AG04449 (cell line): ENCODE measurements at regions of chr12 and their contacts with region 1.

Region 1: GRCh38 chr12:93397412-93397811 is 19.7 kb downstream of the NUDT4 start:
- DNase-seq: no peak
- H3K4me3 ChIP-seq: no peak overlapping the region
- CTCF ChIP-seq: no peak

Region 2: GRCh38 chr12:92987362-92987761 is 410.1 kb before region 1 on chr12:
- CTCF ChIA-PET with region 1: interaction called, 112 read pairs
- POLR2A ChIA-PET with region 1: no interaction called
- DNase-seq: peak; percentile 29
- H3K4me3 ChIP-seq: no peak overlapping the region
- CTCF ChIP-seq: no peak

Region 3: GRCh38 chr12:93008044-93008778 is 389.2 kb before region 1 on chr12:
- CTCF ChIA-PET with region 1: interaction called, 20 read pairs
- POLR2A ChIA-PET with region 1: no interaction called
- DNase-seq: no peak
- H3K4me3 ChIP-seq: no peak overlapping the region
- CTCF ChIP-seq: no peak

Region 4: DNA sequence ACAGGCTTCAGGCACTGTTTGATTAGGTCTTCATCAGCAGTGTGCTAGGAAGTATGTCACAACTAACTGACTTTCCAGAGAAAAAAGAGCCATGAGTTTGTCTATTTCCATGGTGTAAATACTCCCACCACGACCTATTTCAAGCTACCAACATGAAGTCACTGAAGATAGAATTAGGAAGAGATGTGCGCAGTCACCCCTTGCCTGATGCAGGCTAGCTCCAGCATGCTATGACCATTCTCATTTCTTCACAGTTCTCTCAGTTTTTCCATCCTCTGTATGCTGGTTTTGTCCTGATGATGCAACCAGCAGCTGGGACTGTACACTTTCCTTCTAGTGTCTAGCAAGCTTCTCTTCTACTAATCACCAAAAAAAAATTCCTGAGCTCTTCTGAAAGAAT is 211.3 kb before region 1 on chr12:
- CTCF ChIA-PET with region 1: interaction called, 10 read pairs
- POLR2A ChIA-PET with region 1: no interaction called
- DNase-seq: no peak
- H3K4me3 ChIP-seq: no peak overlapping the region
- CTCF ChIP-seq: no peak

Region 5: GRCh38 chr12:93419388-93420034 is 22.1 kb after region 1 on chr12:
- CTCF ChIA-PET with region 1: interaction called, 21 read pairs
- POLR2A ChIA-PET with region 1: no interaction called
- DNase-seq: no peak
- H3K4me3 ChIP-seq: no peak overlapping the region
- CTCF ChIP-seq: peak; percentile 32